Activated naive CD4-positive, alpha-beta T cell treated with anti-CD3 and anti-CD28 coated beads for 36 hours (primary cell): ENCODE measurements at regions of chr6 and their contacts with region 1.

Region 1: DNA sequence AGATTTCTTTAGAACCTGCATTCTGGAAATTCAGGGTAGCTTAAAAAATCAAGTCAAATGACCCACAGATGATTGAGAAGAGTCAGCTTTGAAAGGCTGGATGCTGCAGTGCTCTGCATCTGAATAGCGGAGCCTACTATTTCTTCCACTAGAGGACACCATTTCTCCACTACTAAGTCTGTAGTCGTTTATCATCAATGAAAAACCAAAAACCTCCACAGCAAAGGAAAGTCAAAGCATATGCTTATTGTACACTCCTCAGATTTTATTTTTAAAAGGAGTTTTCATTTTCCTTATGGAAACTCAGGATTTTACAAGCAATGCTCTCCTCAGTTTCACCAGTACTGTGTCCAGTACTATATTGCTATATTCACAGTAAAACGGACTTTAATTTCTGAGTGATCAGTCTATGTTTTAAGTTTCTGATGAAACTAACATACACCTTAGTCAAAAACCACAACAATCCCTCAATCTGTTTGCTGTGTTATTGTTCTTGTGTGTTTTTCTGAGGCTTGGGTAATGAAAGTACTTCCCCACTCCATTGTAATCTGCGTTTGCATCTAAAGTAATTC is 50.5 kb upstream of the ENPP5 start:
- DNase-seq: no peak
- H3K4me3 Mint-ChIP-seq: no peak overlapping the region
- H3K27ac Mint-ChIP-seq: peak overlapping the region; percentile 80
- H3K4me1 Mint-ChIP-seq: peaks cover 30% of the 10 kb centered on the region
- H3K27me3 Mint-ChIP-seq: peaks cover 11% of the 10 kb centered on the region

Region 2: GRCh38 chr6:46042355-46042999 is 178.8 kb before region 1 on chr6:
- CTCF ChIA-PET with region 1: no interaction called
- intact Hi-C with region 1: loop called (anchors 2 kb)
- DNase-seq: peak; percentile 20
- H3K4me3 Mint-ChIP-seq: no peak overlapping the region
- H3K27ac Mint-ChIP-seq: no peak overlapping the region
- H3K4me1 Mint-ChIP-seq: peaks cover 4% of the 10 kb centered on the region
- H3K27me3 Mint-ChIP-seq: no peaks in the 10 kb centered on the region

Region 3: GRCh38 chr6:46129629-46130511 is 91.4 kb before region 1 on chr6 and contains the start of gene ENPP4:
- CTCF ChIA-PET with region 1: no interaction called
- intact Hi-C with region 1: loop called (anchors 1 kb)
- DNase-seq: peak; percentile 91
- H3K4me3 Mint-ChIP-seq: peak within 1 kb of the TSS; percentile 92
- H3K27ac Mint-ChIP-seq: peak within 1 kb of the TSS; percentile 77
- H3K4me1 Mint-ChIP-seq: peaks cover 27% of the 10 kb centered on the region
- H3K27me3 Mint-ChIP-seq: no peaks in the 10 kb centered on the region
- total RNA-seq, gene ENPP4: 7.7 to 8.0 TPM

Region 4: GRCh38 chr6:46279874-46280273 is 58.6 kb after region 1 on chr6:
- CTCF ChIA-PET with region 1: no interaction called
- intact Hi-C with region 1: no loop called
- DNase-seq: no peak
- H3K4me3 Mint-ChIP-seq: no peak overlapping the region
- H3K27ac Mint-ChIP-seq: no peak overlapping the region
- H3K4me1 Mint-ChIP-seq: no peaks in the 10 kb centered on the region
- H3K27me3 Mint-ChIP-seq: peaks cover 14% of the 10 kb centered on the region

Region 5: DNA sequence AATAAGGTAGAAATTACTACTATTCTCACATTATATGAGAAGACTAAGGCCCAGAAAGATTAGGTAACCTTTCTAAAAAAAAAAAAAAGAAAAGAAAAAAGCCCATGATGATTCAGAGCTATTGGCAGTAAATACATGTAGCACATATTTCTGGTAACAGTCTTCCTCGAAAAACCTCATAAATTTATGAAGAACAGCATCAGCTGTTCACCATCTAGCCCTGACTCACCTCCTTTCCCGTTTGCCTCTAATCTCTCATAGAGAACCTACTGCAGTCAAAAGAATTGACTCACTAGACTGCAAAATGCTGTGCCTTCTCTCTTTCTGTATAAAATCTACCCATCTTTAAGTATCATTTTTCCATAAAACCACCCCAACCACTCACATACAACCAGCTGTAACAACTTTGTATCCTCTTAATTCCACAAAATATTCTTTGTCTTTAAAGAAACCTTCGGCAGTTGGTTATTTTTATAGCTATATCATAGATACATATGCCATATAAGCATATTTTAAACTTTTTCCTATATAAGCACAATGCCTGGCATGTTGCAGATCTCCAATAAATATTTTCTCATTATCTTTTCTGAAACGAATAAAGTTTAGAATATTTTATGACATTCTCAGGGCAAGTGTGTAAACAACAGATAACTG is 102.1 kb after region 1 on chr6:
- CTCF ChIA-PET with region 1: no interaction called
- intact Hi-C with region 1: loop called (anchors 1 kb)
- DNase-seq: peak; percentile 17
- H3K4me3 Mint-ChIP-seq: no peak overlapping the region
- H3K27ac Mint-ChIP-seq: no peak overlapping the region
- H3K4me1 Mint-ChIP-seq: peaks cover 7% of the 10 kb centered on the region
- H3K27me3 Mint-ChIP-seq: peaks cover 15% of the 10 kb centered on the region

Region 6: GRCh38 chr6:46491628-46492547 is 270.6 kb after region 1 on chr6:
- CTCF ChIA-PET with region 1: no interaction called
- intact Hi-C with region 1: loop called (anchors 5 kb)
- DNase-seq: no peak
- H3K4me3 Mint-ChIP-seq: peak overlapping the region; percentile 12
- H3K27ac Mint-ChIP-seq: no peak overlapping the region
- H3K4me1 Mint-ChIP-seq: peaks cover 7% of the 10 kb centered on the region
- H3K27me3 Mint-ChIP-seq: peaks cover 58% of the 10 kb centered on the region

Region 7: GRCh38 chr6:46642928-46643751 is 421.8 kb after region 1 on chr6:
- CTCF ChIA-PET with region 1: no interaction called
- intact Hi-C with region 1: loop called (anchors 5 kb)
- DNase-seq: peak; percentile 10
- H3K4me3 Mint-ChIP-seq: no peak overlapping the region
- H3K27ac Mint-ChIP-seq: peak overlapping the region; percentile 24
- H3K4me1 Mint-ChIP-seq: peaks cover 11% of the 10 kb centered on the region
- H3K27me3 Mint-ChIP-seq: peaks cover 14% of the 10 kb centered on the region

Region 8: DNA sequence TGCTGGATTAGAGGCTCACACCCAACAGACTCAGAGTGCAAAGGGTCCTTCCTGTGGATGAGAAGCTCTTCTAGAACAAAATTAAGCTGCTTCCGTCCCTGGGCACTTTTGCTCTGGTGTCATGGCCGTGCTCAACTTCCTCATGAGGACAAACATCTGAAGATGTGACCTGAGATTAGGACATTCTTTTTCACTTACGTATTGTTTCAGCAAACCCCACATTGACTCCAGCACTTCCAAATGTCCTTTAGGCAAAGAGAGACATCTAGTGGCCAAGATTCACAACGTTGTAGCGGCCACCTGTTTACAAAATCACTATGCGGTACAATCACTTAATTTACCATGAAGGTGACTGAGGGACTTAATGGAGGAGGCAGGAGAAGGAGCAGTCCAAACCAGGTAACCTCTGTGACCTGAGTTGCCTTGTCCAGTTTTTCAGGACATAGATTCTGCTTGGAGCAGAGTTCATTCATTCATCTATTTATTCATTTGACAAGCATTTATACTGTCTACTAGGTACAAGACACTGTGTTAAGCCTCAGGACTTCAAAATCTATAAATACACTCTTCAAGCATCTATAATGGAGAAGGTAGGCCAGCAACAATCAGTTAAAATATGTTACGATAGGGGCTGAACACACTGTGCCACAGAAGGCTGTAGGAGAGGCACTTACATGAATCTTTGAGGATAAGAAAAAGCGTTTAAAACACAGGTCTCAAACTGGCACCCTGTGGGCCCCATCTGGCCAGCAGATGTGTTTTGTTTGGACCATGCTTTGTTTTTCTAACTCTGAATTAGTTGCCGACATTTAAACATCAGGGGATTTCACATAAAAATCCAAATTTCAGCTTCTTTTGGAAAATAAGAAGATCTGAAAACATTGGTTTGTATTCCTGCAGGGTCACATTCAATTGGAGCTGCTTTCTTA is 826.4 kb after region 1 on chr6:
- CTCF ChIA-PET with region 1: no interaction called
- intact Hi-C with region 1: loop called (anchors 10 kb)
- DNase-seq: peak; percentile 49
- H3K4me3 Mint-ChIP-seq: no peak overlapping the region
- H3K27ac Mint-ChIP-seq: no peak overlapping the region
- H3K4me1 Mint-ChIP-seq: no peaks in the 10 kb centered on the region
- H3K27me3 Mint-ChIP-seq: peaks cover 7% of the 10 kb centered on the region